Dendritic cell treated with granulocyte-macrophage colony-stimulating factor and Interleukin-4, amounts not matched to agents 40 ng/mL and 50 ng/mL, for 4 days (primary cell): ENCODE measurements at regions of chr1 and their contacts with region 1.

Region 1: GRCh38 chr1:201559679-201560162 is 20.8 kb downstream of the NAV1 start:
- H3K4me3 Mint-ChIP-seq: no peak overlapping the region
- H3K27ac Mint-ChIP-seq: no peak overlapping the region
- H3K4me1 Mint-ChIP-seq: peaks cover 21% of the 10 kb centered on the region
- H3K27me3 Mint-ChIP-seq: peaks cover 6% of the 10 kb centered on the region

Region 2: DNA sequence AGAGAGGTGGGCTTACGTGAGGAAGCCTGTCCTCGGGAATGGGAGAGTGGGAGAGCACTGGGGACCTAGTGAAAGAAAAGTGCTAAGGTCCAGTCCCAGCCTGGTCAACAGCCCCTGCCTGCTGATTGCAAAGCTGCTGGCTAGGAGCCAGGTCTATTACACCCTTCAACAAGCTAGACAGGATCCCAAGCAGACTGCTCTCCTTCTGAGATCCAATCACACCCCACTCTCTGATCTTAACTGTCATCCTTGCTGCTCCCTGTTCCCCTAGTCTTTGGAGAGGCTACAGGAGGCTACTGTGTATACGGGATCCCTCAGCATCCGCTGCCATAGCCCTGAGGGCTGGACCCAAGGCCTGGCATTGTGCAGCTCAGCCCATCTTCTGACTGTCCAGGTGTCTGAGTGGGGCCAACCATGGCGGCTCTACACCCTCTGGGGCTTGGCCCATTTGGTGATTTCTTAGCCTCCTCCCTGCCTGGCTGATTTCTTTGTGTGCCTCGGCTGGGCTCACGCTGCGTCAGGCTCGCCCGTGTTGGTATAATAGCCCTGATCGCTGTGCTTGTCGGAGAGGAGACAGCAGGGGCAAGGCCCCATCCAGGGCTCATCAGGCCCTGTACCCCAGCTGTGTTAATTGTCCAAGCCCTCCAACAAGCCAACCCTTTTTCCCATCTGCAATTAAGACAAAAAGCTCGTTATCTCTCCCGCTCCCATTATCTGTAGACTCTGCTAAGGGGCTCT is 23.2 kb after region 1 on chr1:
- intact Hi-C with region 1: no loop called
- H3K4me3 Mint-ChIP-seq: no peak overlapping the region
- H3K27ac Mint-ChIP-seq: peak overlapping the region; percentile 1
- H3K4me1 Mint-ChIP-seq: peaks cover 23% of the 10 kb centered on the region
- H3K27me3 Mint-ChIP-seq: no peaks in the 10 kb centered on the region

Region 3: GRCh38 chr1:201703621-201704439 is 144.1 kb after region 1 on chr1:
- intact Hi-C with region 1: loop called (anchors 1 kb)
- H3K4me3 Mint-ChIP-seq: no peak overlapping the region
- H3K27ac Mint-ChIP-seq: no peak overlapping the region
- H3K4me1 Mint-ChIP-seq: no peaks in the 10 kb centered on the region
- H3K27me3 Mint-ChIP-seq: peaks cover 4% of the 10 kb centered on the region

Region 4: GRCh38 chr1:202084750-202085681 is 525.3 kb after region 1 on chr1:
- intact Hi-C with region 1: no loop called
- H3K4me3 Mint-ChIP-seq: no peak overlapping the region
- H3K27ac Mint-ChIP-seq: no peak overlapping the region
- H3K4me1 Mint-ChIP-seq: no peaks in the 10 kb centered on the region
- H3K27me3 Mint-ChIP-seq: no peaks in the 10 kb centered on the region